ENCODE measurements at regions of chr1 and their contacts with region 1.

Region 1: DNA sequence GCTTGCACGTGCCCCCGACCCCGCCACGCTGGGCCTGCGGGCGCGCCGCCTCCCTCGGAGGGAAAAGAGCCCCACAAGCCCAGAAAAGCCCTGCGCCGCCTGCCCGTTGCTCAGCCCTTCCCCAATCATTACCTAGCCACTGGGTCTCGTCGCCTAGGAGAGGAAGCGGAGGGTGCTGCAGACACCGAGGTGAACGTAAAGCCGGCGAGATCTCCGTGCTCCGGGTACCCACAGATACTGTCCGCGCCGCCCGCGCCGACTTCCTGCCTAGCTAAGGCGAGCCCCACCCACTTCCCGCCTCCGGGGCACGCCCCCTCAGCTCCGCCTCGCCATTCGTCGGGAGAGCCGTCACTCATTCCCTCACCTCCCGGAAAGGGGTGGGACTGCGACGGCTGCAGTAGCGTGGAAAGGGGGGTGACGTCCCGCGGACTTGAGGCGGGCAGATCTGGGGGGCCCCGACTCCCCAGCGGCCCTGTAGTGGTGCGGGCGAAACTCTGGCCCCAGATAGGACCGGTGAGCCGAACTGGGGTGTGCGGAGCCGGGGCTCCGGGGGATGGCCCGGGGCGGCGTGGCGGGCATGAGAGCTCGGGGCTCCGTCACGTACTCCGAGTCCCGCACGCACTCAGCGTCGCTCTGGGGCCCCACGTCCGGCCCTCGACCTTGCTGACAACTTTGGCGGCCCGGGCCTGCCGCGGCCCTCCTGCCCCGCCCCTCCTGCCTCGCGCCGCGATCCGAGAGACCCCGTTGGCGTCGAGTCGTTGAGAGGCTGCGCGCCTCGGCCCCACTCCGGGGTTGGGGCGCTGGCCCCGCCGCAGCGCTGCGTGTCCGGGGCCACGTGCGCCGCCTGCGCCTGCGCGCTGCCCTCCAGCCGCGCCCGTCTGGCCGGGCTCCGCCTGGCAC is at the start of gene ENO1:
- DNase-seq: peak; percentile 97 to 100 (median 99)
- ATAC-seq: peak; percentile 82
- H3K4me3 ChIP-seq: peak within 1 kb of the TSS; percentile 90
- H3K4me3 Mint-ChIP-seq: peak within 1 kb of the TSS; percentile 98
- H3K27ac ChIP-seq: peak within 1 kb of the TSS; percentile 96 to 97
- H3K27ac Mint-ChIP-seq: peak within 1 kb of the TSS; percentile 92
- H3K4me1 ChIP-seq: peaks cover 53% of the 10 kb centered on the region
- H3K4me1 Mint-ChIP-seq: peaks cover 52% of the 10 kb centered on the region
- H3K27me3 ChIP-seq: no peaks in the 10 kb centered on the region
- H3K27me3 Mint-ChIP-seq: no peaks in the 10 kb centered on the region
- CTCF ChIP-seq: no peak
- total RNA-seq, gene ENO1: 120 to 129 TPM

Region 2: DNA sequence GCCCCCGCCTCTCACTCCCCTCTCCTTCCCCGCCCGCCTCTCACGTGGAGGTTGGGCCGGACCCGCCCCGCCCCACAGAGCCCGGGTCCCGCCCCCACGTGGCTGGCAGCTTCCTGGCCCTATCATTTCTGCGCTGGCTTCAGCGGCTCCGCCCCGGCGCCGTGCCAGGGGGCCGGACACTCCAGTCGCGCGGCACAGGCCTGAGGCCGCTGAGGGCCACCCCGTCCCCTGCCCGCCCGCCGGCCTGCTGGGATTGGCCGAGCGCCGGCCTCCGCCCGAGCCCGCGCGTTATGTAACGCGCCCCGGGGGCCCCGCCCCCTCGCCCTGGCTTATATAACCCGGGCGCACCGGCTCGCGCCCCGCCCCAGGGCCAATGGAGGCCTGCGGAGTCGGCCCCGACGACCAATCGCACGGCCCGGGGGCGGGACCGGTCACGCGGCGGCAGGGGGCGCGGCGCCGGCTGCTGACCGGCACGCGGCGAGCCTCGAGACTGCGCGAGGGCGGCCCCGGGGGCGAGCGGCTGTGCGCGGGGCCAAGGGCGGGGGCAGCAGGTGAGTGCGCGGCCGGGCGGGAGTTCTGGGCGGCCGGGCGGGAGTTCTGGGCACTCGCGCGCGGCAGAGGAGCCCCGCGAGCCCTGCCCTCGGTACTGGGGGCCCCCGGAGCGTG is 1094.7 kb before region 1 on chr1 and contains the start of gene PER3:
- CTCF ChIA-PET with region 1: no interaction called
- POLR2A ChIA-PET with region 1: no interaction called
- intact Hi-C with region 1: loop called in 1 of 2 experiments (anchors 10 kb)
- DNase-seq: peak; percentile 79 to 96 (median 87)
- ATAC-seq: peak; percentile 86
- H3K4me3 ChIP-seq: peak within 1 kb of the TSS; percentile 69
- H3K4me3 Mint-ChIP-seq: peak within 1 kb of the TSS; percentile 79
- H3K27ac ChIP-seq: peak within 1 kb of the TSS; percentile 73 to 91
- H3K27ac Mint-ChIP-seq: peak within 1 kb of the TSS; percentile 78
- H3K4me1 ChIP-seq: peaks cover 34% of the 10 kb centered on the region
- H3K4me1 Mint-ChIP-seq: peaks cover 37% of the 10 kb centered on the region
- H3K27me3 ChIP-seq: no peaks in the 10 kb centered on the region
- H3K27me3 Mint-ChIP-seq: no peaks in the 10 kb centered on the region
- CTCF ChIP-seq: no peak
- total RNA-seq, gene PER3: 10.1 to 11.4 TPM

Region 3: GRCh38 chr1:8817406-8818324 is 61.0 kb before region 1 on chr1 and contains the start of gene RERE:
- CTCF ChIA-PET with region 1: no interaction called
- POLR2A ChIA-PET with region 1: interaction called, 9 read pairs
- intact Hi-C with region 1: loop called (anchors 2 to 5 kb)
- DNase-seq: peak; percentile 93 to 99 (median 96)
- ATAC-seq: peak; percentile 95
- H3K4me3 ChIP-seq: peak within 1 kb of the TSS; percentile 96
- H3K4me3 Mint-ChIP-seq: peak within 1 kb of the TSS; percentile 92
- H3K27ac ChIP-seq: peak within 1 kb of the TSS; percentile 80 to 83
- H3K27ac Mint-ChIP-seq: peak within 1 kb of the TSS; percentile 86
- H3K4me1 ChIP-seq: peaks cover 20% of the 10 kb centered on the region
- H3K4me1 Mint-ChIP-seq: peaks cover 44% of the 10 kb centered on the region
- H3K27me3 ChIP-seq: peaks cover 0 to 4% of the 10 kb centered on the region in 2 experiments
- H3K27me3 Mint-ChIP-seq: peaks cover 11% of the 10 kb centered on the region
- CTCF ChIP-seq: no peak
- total RNA-seq, gene RERE: 78.4 to 84.0 TPM

Region 4: DNA sequence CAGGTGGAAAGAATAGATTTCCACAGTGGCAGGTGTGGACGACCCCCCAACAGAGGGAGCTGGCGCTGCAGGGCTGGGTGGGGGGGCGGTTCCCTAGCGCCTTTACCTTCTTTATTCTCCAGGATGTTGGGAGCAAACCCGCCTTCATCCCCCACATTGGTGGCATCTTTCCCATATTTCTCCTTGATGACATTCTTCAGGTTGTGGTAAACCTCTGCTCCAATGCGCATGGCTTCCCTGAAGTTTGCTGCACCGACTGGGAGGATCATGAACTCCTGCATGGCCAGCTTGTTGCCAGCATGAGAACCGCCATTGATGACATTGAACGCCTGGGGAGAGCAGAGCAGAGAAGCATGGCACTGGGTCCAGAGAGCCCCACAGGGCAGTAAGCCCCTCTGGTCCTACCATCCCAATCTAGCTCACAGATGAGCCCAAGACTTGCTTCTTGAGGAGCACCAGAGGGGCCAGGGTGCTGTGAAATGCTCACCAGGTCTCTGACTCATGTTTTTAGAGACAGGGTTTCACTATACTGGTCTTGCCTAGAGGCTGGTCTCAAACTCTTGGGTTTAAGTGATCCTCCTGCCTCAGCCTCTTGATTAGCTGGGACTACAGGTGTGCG is 12.4 kb before region 1 on chr1:
- CTCF ChIA-PET with region 1: interaction called, 22 read pairs
- POLR2A ChIA-PET with region 1: interaction called, 21 read pairs
- intact Hi-C with region 1: no loop called
- DNase-seq: no peak
- ATAC-seq: no peak
- H3K4me3 ChIP-seq: no peak overlapping the region
- H3K4me3 Mint-ChIP-seq: no peak overlapping the region
- H3K27ac ChIP-seq: no peak overlapping the region
- H3K27ac Mint-ChIP-seq: no peak overlapping the region
- H3K4me1 ChIP-seq: peaks cover 8% of the 10 kb centered on the region
- H3K4me1 Mint-ChIP-seq: peaks cover 10% of the 10 kb centered on the region
- H3K27me3 ChIP-seq: no peaks in the 10 kb centered on the region
- H3K27me3 Mint-ChIP-seq: no peaks in the 10 kb centered on the region
- CTCF ChIP-seq: no peak

Region 5: GRCh38 chr1:9128520-9129265 is 250.0 kb after region 1 on chr1 and contains the start of gene GPR157:
- CTCF ChIA-PET with region 1: no interaction called
- POLR2A ChIA-PET with region 1: interaction called, 3 read pairs
- intact Hi-C with region 1: loop called in 1 of 2 experiments (anchors 1 kb)
- DNase-seq: peak; percentile 65 to 93 (median 81)
- ATAC-seq: peak; percentile 86
- H3K4me3 ChIP-seq: peak within 1 kb of the TSS; percentile 70
- H3K4me3 Mint-ChIP-seq: peak within 1 kb of the TSS; percentile 91
- H3K27ac ChIP-seq: peak within 1 kb of the TSS; percentile 56
- H3K27ac Mint-ChIP-seq: peak within 1 kb of the TSS; percentile 70
- H3K4me1 ChIP-seq: peaks cover 25% of the 10 kb centered on the region
- H3K4me1 Mint-ChIP-seq: peaks cover 40% of the 10 kb centered on the region
- H3K27me3 ChIP-seq: no peaks in the 10 kb centered on the region
- H3K27me3 Mint-ChIP-seq: no peaks in the 10 kb centered on the region
- CTCF ChIP-seq: no peak
- total RNA-seq, gene GPR157: 2.1 to 5.1 TPM

Measured in CD4-positive, alpha-beta T cell (primary cell).